ENCODE measurements at regions of chr12 and their contacts with region 1.

Region 1: GRCh38 chr12:109178532-109178931 is 62.1 kb downstream of the ACACB start:
- DNase-seq: no peak
- H3K4me3 ChIP-seq: no peak overlapping the region
- H3K27ac ChIP-seq: no peak overlapping the region
- H3K4me1 ChIP-seq: no peaks in the 10 kb centered on the region
- H3K27me3 ChIP-seq: no peaks in the 10 kb centered on the region
- CTCF ChIP-seq: no peak

Region 2: DNA sequence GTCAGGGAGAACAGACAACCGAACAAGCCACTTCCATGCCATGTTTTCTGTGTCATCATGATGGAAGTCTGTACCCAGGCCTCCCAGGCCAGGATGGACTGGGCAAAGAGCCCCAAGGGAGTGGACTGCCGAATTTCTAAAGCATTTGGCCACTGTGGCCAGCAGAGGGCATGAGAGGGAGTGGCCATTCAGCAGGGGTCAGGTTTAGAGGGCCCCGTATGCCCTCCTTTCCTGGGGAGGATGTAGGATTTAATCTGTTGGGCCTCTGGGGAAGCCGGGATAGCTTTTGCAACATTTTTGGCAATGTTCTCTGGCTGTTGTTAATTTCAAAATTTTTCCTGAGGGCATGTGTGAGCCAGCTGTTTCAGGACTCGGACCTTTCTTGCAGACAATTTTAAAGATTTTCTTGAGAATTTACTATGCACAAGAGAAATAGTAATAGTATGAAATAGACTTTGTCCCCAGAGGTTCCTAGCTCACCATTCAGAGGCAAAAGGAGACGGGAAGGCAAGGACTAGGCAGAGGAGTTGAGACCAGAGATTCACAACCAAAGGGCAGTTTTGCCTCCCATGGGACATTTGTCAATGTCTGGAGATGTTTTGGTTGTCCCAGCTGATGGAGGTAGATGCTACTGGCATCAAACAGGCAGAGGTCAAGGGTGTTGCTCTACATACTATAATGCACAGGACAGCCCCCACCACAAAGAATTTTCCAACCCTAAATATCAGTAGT is 44.2 kb before region 1 on chr12:
- CTCF ChIA-PET with region 1: no interaction called
- dilution Hi-C with region 1: loop called (anchors 5 kb)
- in situ Hi-C with region 1: no loop called
- intact Hi-C with region 1: no loop called
- DNase-seq: peak; percentile 3
- H3K4me3 ChIP-seq: no peak overlapping the region
- H3K27ac ChIP-seq: no peak overlapping the region
- H3K4me1 ChIP-seq: no peaks in the 10 kb centered on the region
- H3K27me3 ChIP-seq: no peaks in the 10 kb centered on the region
- CTCF ChIP-seq: peak; percentile 47 to 66

Region 3: DNA sequence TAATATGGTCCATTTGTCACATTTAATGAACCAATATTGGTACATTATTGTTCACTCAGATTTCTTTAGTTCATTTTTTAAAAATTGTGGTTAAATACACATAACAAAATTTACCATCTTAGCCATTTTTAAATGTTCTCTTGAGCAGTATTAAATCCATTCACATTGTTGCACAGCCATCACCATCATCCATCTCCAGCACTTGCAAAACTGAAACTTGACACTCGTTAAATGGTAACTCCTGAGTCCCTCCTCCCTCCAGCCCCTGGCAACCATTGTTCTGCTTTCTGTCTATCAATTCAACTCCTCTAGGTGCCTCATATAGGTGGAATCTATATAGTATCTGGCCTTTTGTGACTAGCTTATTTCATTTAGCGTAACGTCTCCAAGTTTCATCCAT is 24.2 kb after region 1 on chr12:
- CTCF ChIA-PET with region 1: no interaction called
- dilution Hi-C with region 1: no loop called
- in situ Hi-C with region 1: no loop called
- intact Hi-C with region 1: no loop called
- DNase-seq: no peak
- H3K4me3 ChIP-seq: no peak overlapping the region
- H3K27ac ChIP-seq: no peak overlapping the region
- H3K4me1 ChIP-seq: peaks cover 17% of the 10 kb centered on the region
- H3K27me3 ChIP-seq: no peaks in the 10 kb centered on the region
- CTCF ChIP-seq: no peak

Region 4: GRCh38 chr12:109247831-109248654 is 69.5 kb after region 1 on chr12:
- CTCF ChIA-PET with region 1: no interaction called
- dilution Hi-C with region 1: loop called (anchors 5 kb)
- in situ Hi-C with region 1: no loop called
- intact Hi-C with region 1: no loop called
- DNase-seq: no peak
- H3K4me3 ChIP-seq: no peak overlapping the region
- H3K27ac ChIP-seq: no peak overlapping the region
- H3K4me1 ChIP-seq: no peaks in the 10 kb centered on the region
- H3K27me3 ChIP-seq: no peaks in the 10 kb centered on the region
- CTCF ChIP-seq: no peak

Region 5: GRCh38 chr12:109277899-109278762 is 99.6 kb after region 1 on chr12:
- CTCF ChIA-PET with region 1: no interaction called
- dilution Hi-C with region 1: loop called (anchors 5 kb)
- in situ Hi-C with region 1: no loop called
- intact Hi-C with region 1: no loop called
- DNase-seq: peak; percentile 3
- H3K4me3 ChIP-seq: no peak overlapping the region
- H3K27ac ChIP-seq: no peak overlapping the region
- H3K4me1 ChIP-seq: no peaks in the 10 kb centered on the region
- H3K27me3 ChIP-seq: peaks cover 2% of the 10 kb centered on the region
- CTCF ChIP-seq: no peak

Measured in mammary epithelial cell (primary cell).